Naive thymus-derived CD4-positive, alpha-beta T cell (primary cell): ENCODE measurements at regions of chrX and their contacts with region 1.

Region 1: GRCh38 chrX:19863212-19863856 is 24.1 kb downstream of the SH3KBP1 start:
- DNase-seq: no peak
- ATAC-seq: no peak
- H3K4me3 ChIP-seq: no peak overlapping the region
- H3K4me3 Mint-ChIP-seq: peak overlapping the region in 3 of 10 donors; percentile 35 to 54 (median 43)
- H3K27ac ChIP-seq: no peak overlapping the region
- H3K27ac Mint-ChIP-seq: peak overlapping the region in 6 of 9 donors; percentile 25 to 59 (median 42)
- H3K4me1 ChIP-seq: peaks cover 12 to 28% of the 10 kb centered on the region in 2 donors
- H3K4me1 Mint-ChIP-seq: peaks cover 21 to 74% (median 50%) of the 10 kb centered on the region in 7 donors
- H3K27me3 ChIP-seq: no peaks in the 10 kb centered on the region
- H3K27me3 Mint-ChIP-seq: no peaks in the 10 kb centered on the region

Region 2: GRCh38 chrX:19627533-19627932 is 235.8 kb before region 1 on chrX:
- CTCF ChIA-PET with region 1: no interaction called
- POLR2A ChIA-PET with region 1: no interaction called
- intact Hi-C with region 1: no loop called
- DNase-seq: peak in 1 of 9 donors; percentile 24
- ATAC-seq: no peak
- H3K4me3 ChIP-seq: no peak overlapping the region
- H3K4me3 Mint-ChIP-seq: peak overlapping the region in 1 of 10 donors; percentile 15
- H3K27ac ChIP-seq: no peak overlapping the region
- H3K27ac Mint-ChIP-seq: peak overlapping the region in 3 of 9 donors; percentile 38 to 66 (median 63)
- H3K4me1 ChIP-seq: peaks cover 0 to 30% of the 10 kb centered on the region in 2 donors
- H3K4me1 Mint-ChIP-seq: peaks cover 9 to 71% (median 44%) of the 10 kb centered on the region in 7 donors
- H3K27me3 ChIP-seq: no peaks in the 10 kb centered on the region
- H3K27me3 Mint-ChIP-seq: no peaks in the 10 kb centered on the region

Region 3: DNA sequence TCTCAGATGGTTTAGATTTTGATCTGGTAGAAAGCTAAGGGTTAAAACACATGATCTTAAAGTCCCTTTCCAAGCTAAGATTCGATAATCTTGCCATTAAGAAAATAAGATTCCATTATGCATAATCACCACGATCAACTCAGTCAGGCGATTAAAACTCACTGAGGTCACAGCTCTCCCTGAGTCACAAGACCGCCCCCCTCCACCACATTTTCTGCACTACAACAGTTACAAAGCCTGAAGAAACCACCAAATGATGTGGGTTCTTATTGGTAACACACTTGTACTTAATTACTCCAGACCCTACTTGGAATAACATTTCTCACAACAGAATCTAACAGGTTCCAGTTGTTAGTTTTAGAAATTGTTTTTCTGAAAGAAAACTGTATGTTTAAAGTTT is 38.7 kb before region 1 on chrX:
- CTCF ChIA-PET with region 1: interaction called, 10 read pairs
- POLR2A ChIA-PET with region 1: no interaction called
- intact Hi-C with region 1: no loop called
- DNase-seq: peak in 1 of 9 donors; percentile 19
- ATAC-seq: peak; percentile 49
- H3K4me3 ChIP-seq: no peak overlapping the region
- H3K4me3 Mint-ChIP-seq: peak overlapping the region in 4 of 10 donors; percentile 1 to 39 (median 16)
- H3K27ac ChIP-seq: no peak overlapping the region
- H3K27ac Mint-ChIP-seq: peak overlapping the region in 5 of 9 donors; percentile 8 to 62 (median 48)
- H3K4me1 ChIP-seq: peaks cover 12 to 30% of the 10 kb centered on the region in 2 donors
- H3K4me1 Mint-ChIP-seq: peaks cover 12 to 60% (median 43%) of the 10 kb centered on the region in 7 donors
- H3K27me3 ChIP-seq: no peaks in the 10 kb centered on the region
- H3K27me3 Mint-ChIP-seq: no peaks in the 10 kb centered on the region

Region 4: DNA sequence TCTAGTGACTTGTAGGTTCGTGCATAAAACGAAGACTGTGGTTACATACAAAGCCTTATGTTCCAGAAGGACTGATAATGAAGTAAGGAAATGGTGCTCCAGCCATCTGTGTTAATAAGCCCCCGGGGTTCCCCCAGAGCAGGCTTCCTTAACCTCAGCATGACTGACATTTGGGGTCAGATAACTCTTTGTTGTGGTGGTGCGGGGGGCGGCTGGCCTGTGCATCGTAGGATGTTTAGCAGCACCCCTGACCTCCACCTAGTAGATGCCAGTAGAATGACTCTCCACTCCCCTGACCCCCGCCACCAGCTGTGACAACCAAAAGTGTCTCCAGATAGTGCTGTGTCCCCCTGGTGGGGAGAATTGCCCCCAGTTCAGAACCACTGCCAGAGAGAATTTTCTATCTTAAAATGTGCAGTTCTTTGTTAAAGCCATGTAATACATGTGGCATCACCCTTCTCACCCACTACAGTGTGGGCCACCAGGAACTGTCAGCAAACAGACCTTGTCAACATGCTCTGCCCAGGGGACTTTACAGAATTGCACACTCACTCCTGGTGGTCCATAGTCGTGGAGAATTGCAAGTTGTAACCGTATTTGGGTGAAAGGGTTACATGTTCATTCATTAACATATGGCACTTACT is 16.5 kb after region 1 on chrX:
- CTCF ChIA-PET with region 1: no interaction called
- POLR2A ChIA-PET with region 1: no interaction called
- intact Hi-C with region 1: loop called in 1 of 2 experiments (anchors 2 kb)
- DNase-seq: no peak
- ATAC-seq: peak; percentile 18
- H3K4me3 ChIP-seq: no peak overlapping the region
- H3K4me3 Mint-ChIP-seq: no peak overlapping the region
- H3K27ac ChIP-seq: no peak overlapping the region
- H3K27ac Mint-ChIP-seq: peak overlapping the region in 4 of 9 donors; percentile 6 to 69 (median 52)
- H3K4me1 ChIP-seq: peaks cover 5 to 6% of the 10 kb centered on the region in 2 donors
- H3K4me1 Mint-ChIP-seq: peaks cover 30 to 71% (median 58%) of the 10 kb centered on the region in 7 donors
- H3K27me3 ChIP-seq: no peaks in the 10 kb centered on the region
- H3K27me3 Mint-ChIP-seq: no peaks in the 10 kb centered on the region

Region 5: GRCh38 chrX:20029728-20030127 is 166.4 kb after region 1 on chrX:
- CTCF ChIA-PET with region 1: no interaction called
- POLR2A ChIA-PET with region 1: no interaction called
- intact Hi-C with region 1: no loop called
- DNase-seq: no peak
- ATAC-seq: no peak
- H3K4me3 ChIP-seq: no peak overlapping the region
- H3K4me3 Mint-ChIP-seq: no peak overlapping the region
- H3K27ac ChIP-seq: no peak overlapping the region
- H3K27ac Mint-ChIP-seq: peak overlapping the region in 2 of 9 donors; percentile 24 to 25
- H3K4me1 ChIP-seq: peaks cover 0 to 13% of the 10 kb centered on the region in 2 donors
- H3K4me1 Mint-ChIP-seq: peaks cover 0 to 21% (median 10%) of the 10 kb centered on the region in 7 donors
- H3K27me3 ChIP-seq: no peaks in the 10 kb centered on the region
- H3K27me3 Mint-ChIP-seq: no peaks in the 10 kb centered on the region